ENCODE measurements at regions of chr3 and their contacts with region 1.

Region 1: DNA sequence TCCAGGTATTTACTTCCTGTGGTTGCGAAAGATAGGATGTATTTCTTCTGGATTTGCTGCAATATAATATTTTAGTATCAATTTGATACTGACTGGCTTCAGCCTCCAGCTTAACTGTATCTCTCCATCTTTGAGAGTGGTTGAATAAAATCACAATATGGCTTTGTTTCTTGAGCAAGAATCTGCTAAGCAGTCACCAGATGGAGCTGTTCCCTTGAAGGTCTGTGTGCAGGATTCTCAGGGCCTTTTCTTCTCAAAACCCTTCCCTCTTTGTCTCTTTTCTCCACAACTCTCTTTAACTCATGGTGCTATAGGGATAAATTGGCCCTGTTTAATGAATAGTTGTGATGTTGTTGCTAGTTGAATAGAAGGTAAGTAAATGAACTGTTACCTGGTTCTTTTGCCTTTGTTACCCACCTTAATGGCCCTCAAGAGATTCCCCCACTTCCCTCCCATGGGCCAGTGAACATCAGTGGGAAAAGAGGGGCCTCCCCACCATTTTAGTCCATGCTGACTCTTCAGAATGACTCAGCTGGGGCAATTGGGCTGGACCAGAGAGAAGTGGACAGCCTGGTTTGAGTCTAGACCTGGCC is 34.8 kb upstream of the RAB6B start:
- DNase-seq: peak in 1 of 2 experiments; percentile 49
- H3K4me3 ChIP-seq: no peak overlapping the region
- H3K4me3 Mint-ChIP-seq: no peak overlapping the region
- H3K27ac Mint-ChIP-seq: no peak overlapping the region
- H3K4me1 ChIP-seq: no peaks in the 10 kb centered on the region
- H3K4me1 Mint-ChIP-seq: no peaks in the 10 kb centered on the region
- H3K27me3 ChIP-seq: no peaks in the 10 kb centered on the region
- H3K27me3 Mint-ChIP-seq: no peaks in the 10 kb centered on the region
- CTCF ChIP-seq: peak; percentile 64 to 75

Region 2: DNA sequence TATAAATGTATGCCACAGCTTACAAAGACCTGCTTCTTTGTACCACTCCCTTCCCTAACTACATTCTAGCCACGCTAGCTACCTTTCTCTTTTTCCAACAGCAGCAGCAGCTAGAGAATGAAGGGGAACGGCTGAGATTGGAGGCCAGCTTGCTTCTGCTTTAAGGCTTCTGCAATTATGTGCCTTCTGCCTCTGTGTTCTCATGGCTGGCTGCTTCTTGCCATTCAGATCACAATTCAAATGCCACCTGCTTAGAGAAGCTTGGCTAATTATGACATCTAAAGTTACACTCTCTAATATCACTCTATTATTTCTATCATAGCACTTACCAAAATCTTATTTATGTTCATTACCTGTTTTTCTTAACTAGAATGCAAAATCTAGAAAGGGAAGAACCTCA is 225.0 kb after region 1 on chr3:
- CTCF ChIA-PET with region 1: no interaction called
- POLR2A ChIA-PET with region 1: no interaction called
- intact Hi-C with region 1: loop called (anchors 10 kb)
- DNase-seq: no peak
- H3K4me3 ChIP-seq: no peak overlapping the region
- H3K4me3 Mint-ChIP-seq: no peak overlapping the region
- H3K27ac Mint-ChIP-seq: no peak overlapping the region
- H3K4me1 ChIP-seq: no peaks in the 10 kb centered on the region
- H3K4me1 Mint-ChIP-seq: peaks cover 6% of the 10 kb centered on the region
- H3K27me3 ChIP-seq: no peaks in the 10 kb centered on the region
- H3K27me3 Mint-ChIP-seq: no peaks in the 10 kb centered on the region
- CTCF ChIP-seq: no peak

Region 3: GRCh38 chr3:134186391-134186790 is 256.0 kb after region 1 on chr3:
- CTCF ChIA-PET with region 1: no interaction called
- POLR2A ChIA-PET with region 1: no interaction called
- intact Hi-C with region 1: loop called (anchors 10 kb)
- DNase-seq: no peak
- H3K4me3 ChIP-seq: no peak overlapping the region
- H3K4me3 Mint-ChIP-seq: no peak overlapping the region
- H3K27ac Mint-ChIP-seq: no peak overlapping the region
- H3K4me1 ChIP-seq: no peaks in the 10 kb centered on the region
- H3K4me1 Mint-ChIP-seq: peaks cover 17% of the 10 kb centered on the region
- H3K27me3 ChIP-seq: no peaks in the 10 kb centered on the region
- H3K27me3 Mint-ChIP-seq: no peaks in the 10 kb centered on the region
- CTCF ChIP-seq: no peak